ENCODE measurements at regions of chr14 and their contacts with region 1.

Region 1: DNA sequence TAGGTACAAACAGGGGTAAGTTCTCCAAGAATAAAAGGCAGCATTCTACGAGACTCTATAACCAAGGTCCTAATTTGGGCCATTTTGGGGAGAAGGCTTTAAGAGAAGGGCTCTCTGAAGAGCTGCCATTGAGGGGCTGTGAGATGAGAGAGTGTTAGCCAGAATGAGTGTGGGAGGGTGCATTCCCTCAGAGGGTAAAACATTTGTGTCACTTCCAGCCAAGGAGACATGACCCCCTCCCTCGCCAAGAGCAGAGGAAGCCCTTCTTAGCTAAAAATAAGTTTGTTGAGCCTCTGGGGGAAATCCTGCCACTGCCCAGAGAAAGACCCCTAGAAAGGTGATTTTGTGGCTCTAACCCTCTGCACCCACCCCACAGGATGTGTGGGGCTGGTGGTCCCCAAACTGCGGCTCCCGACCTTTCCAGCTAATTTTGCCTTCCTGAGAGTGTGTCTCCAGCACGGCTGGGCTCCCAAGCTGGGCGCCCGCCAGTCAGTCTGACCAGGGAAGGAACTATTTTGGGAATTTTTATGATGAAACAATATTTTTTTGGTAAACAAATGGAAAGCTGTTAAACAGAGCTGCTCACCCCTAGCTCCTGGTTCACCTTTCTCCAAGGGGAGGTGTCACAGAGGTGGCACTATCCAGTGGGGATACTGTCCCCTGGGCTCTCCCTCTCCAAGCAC is 65.9 kb upstream of the JDP2 start:
- DNase-seq: peak; percentile 71 to 85
- H3K4me3 ChIP-seq: peak overlapping the region; percentile 11 to 28
- H3K27ac ChIP-seq: peak overlapping the region; percentile 79 to 80
- H3K4me1 ChIP-seq: peaks cover 0 to 37% (median 20%) of the 10 kb centered on the region in 4 donors
- H3K27me3 ChIP-seq: no peaks in the 10 kb centered on the region
- CTCF ChIP-seq: no peak

Region 2: GRCh38 chr14:75399821-75400678 is 38.2 kb after region 1 on chr14:
- intact Hi-C with region 1: loop called (anchors 5 kb)
- DNase-seq: peak; percentile 96 to 98
- H3K4me3 ChIP-seq: no peak overlapping the region
- H3K27ac ChIP-seq: peak overlapping the region; percentile 83
- H3K4me1 ChIP-seq: peaks cover 0 to 30% (median 22%) of the 10 kb centered on the region in 4 donors
- H3K27me3 ChIP-seq: no peaks in the 10 kb centered on the region
- CTCF ChIP-seq: no peak

Measured in tibial artery (tissue), 4 donors.